Heart left ventricle (tissue), 16 donors: ENCODE measurements at regions of chr12 and their contacts with region 1.

Region 1: DNA sequence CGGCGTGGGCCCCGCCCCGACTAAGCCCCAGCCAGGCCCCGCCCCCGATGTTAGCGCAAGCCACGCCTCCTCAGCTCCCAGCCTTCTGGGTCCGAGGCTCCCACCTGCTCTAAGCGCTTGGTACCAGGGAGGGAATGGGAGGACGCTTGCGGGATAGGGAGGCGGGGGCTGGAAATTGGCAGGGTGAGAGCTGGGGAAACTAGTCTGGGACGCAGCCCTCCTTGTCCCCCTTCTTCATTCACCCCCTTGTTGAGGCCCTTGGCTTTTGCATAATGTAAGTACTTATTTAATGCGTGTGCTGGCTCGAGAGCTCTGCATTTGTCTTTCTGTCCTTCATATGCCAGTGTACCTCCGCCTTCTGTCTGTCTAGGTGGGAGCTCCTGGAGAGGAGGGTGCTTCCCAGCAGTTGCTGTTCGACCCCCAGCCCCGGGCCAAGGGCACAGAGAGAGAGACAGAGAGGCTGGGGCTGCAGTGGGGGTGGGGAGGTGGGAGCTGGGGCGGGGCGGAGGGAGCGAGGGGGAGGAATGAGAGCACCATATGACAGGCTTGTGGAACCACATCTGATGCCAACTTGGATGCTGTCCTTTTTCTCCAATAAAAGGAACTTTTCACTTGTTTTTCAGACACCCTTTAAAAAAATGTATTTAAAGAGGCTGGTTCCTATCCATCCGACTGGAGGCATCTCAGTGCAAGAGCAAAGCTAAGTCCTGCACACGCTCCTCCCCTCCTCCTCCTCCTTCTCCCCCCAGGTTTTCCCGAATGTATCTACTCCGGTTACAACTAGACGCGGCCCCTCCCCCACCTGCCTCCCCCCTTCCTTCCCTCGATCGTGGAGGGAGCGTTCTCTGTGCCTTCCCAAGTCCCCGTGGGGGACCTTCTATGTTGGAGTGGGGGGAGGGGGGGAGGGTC is 25.6 kb upstream of the MAP1LC3B2 start:
- DNase-seq: peak; percentile 67 to 89 (median 76)
- ATAC-seq: peak; percentile 82 to 92 (median 92)
- H3K4me3 ChIP-seq: peak overlapping the region; percentile 19 to 70 (median 58)
- H3K27ac ChIP-seq: peak overlapping the region in 5 of 12 donors; percentile 38 to 81 (median 58)
- H3K4me1 ChIP-seq: peaks cover 0 to 42% (median 15%) of the 10 kb centered on the region in 12 donors
- H3K27me3 ChIP-seq: peaks cover 0 to 12% (median 0%) of the 10 kb centered on the region in 9 donors
- CTCF ChIP-seq: no peak
- POLR2A ChIP-seq: no peak

Region 2: DNA sequence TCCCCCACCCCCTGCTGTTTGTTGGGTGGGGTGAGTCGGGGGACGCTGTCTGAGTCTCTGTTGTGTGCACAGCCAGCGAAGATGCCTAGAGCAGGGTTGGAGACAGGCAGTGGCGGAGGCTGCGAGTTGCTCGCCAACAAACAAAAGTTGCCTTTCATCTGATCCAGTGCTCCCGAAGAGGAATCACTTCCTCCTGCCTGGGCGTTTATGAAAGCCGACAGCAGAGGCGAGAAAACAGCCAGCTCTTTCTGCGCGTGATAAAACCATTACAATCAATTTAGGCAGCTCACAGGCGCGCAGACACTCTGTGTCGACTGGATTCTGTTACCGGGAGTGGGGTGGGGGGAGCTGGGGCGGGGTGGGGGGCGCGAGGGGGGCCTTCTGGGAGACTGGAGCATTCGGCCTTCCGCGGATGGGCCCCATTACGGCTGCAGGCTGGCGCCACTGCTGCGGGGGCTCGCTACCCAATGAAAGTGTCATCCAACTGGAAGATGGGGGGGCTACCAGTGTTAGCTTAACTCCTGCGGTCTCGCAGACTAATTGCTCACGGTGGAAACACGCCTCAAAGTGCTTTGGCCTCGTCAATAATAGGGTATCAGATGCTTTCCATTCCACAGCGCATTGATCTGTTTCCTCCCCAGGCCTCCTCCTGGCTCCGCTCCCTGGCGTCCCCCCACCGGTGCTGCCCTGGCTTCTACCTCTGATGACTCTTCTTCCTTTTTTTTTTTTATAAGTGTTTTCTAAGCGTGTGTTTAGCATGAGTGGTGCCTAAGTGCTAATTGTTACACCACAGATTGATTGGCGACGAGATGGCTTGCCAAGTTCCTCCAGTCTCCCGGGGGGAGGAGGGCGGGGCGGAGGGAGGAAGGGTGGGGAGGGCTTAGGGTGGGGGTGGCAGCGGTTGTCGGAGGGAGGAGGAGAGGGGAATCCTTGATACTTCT is 934.5 kb before region 1 on chr12:
- intact Hi-C with region 1: no loop called
- DNase-seq: peak; percentile 36 to 67 (median 63)
- ATAC-seq: peak; percentile 42 to 88 (median 60)
- H3K4me3 ChIP-seq: peak overlapping the region in 6 of 12 donors; percentile 10 to 32 (median 26)
- H3K27ac ChIP-seq: peak overlapping the region in 10 of 12 donors; percentile 26 to 68 (median 48)
- H3K4me1 ChIP-seq: peaks cover 0 to 18% (median 7%) of the 10 kb centered on the region in 12 donors
- H3K27me3 ChIP-seq: peaks cover 0 to 25% (median 4%) of the 10 kb centered on the region in 9 donors
- CTCF ChIP-seq: no peak
- POLR2A ChIP-seq: no peak

Region 3: GRCh38 chr12:116455540-116456329 is 77.9 kb before region 1 on chr12:
- intact Hi-C with region 1: loop called in 1 of 10 experiments (anchors 10 kb)
- DNase-seq: peak; percentile 57 to 82 (median 81)
- ATAC-seq: peak; percentile 85 to 96 (median 92)
- H3K4me3 ChIP-seq: peak overlapping the region in 5 of 12 donors; percentile 5 to 38 (median 26)
- H3K27ac ChIP-seq: peak overlapping the region; percentile 47 to 96 (median 74)
- H3K4me1 ChIP-seq: peaks cover 0 to 24% (median 20%) of the 10 kb centered on the region in 12 donors
- H3K27me3 ChIP-seq: no peaks in the 10 kb centered on the region
- CTCF ChIP-seq: no peak
- POLR2A ChIP-seq: no peak

Region 4: DNA sequence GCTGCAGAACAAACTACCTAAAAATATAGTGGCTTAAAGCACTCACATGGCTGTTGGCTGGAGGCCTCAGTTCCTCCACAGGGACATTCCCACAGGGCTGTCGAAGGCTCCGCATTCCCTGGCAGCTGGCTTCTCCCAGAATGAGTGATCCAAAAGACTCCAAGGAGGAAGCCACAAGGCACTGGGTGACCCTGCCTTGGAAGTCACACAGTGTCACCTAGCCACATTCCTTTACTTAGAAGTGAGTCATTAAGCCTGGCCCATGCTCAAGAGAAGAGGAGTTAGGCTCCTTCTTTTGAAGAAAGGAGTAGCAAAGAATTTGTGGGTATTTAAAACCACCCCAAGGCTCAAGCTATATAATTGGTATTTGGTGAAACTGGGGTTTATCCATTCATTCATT is 38.3 kb before region 1 on chr12:
- intact Hi-C with region 1: loop called in 1 of 10 experiments (anchors 1 kb)
- DNase-seq: no peak
- ATAC-seq: no peak
- H3K4me3 ChIP-seq: no peak overlapping the region
- H3K27ac ChIP-seq: no peak overlapping the region
- H3K4me1 ChIP-seq: no peaks in the 10 kb centered on the region
- H3K27me3 ChIP-seq: no peaks in the 10 kb centered on the region
- CTCF ChIP-seq: no peak
- POLR2A ChIP-seq: no peak

Region 5: DNA sequence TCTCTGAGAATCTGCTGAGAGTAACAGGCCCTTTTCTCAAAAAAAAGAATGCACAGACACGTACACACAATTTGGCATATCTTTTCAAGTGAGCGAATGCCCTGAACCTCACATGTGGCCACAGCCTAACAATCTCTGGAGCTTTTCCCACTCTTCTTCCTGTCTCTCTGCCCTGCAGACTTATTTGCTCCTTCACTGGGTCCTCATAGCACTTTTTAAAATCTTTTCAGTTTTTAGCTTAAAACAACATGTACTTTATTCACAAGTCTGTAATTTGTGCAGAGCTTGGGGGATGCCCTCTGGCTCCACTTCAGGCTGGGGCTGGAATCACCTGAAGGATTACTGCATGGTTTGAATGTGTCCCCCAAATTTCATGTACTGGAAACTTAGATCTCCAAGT is 34.6 kb after region 1 on chr12:
- intact Hi-C with region 1: no loop called
- DNase-seq: no peak
- ATAC-seq: no peak
- H3K4me3 ChIP-seq: no peak overlapping the region
- H3K27ac ChIP-seq: no peak overlapping the region
- H3K4me1 ChIP-seq: no peaks in the 10 kb centered on the region
- H3K27me3 ChIP-seq: no peaks in the 10 kb centered on the region
- CTCF ChIP-seq: no peak
- POLR2A ChIP-seq: no peak